ENCODE measurements at regions of chr14 and their contacts with region 1.

Region 1: DNA sequence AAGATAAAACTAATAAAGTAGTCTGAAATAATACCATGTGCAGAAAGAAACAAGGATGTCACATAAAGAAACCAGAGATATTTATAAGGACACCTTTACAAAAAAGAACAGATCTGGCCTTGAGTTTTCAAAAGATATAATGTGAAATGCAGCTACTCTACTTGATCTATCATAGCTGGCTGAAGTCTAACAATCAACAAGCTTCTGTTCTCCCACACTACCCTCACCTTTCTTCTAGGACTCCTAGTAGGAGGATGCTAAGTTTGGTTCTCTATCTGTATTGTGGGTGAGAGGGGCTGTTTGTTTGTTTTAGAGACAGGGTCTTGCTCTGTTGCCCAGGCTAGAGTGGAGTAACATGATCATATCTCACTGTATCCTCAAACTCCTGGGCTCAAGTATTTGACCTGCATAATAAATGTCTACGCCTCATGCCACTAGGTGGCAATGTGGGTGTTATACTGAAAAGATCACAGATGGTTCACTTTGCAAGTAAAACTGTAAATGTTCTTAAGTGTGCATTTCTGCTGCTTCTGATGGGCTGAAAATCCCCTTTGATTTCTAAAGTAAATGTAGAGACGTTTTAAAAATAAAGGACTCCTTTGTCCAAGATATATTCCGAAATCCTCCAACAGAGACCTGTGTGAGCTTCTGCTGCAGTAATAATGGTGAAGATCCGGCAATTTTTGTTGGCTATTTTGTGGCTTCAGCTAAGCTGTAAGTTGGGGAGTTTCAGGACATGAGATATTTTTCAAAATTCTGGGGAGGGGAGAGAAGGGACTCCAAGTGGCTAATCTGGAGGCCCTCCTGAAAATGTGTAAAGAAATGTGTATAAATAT is 269.3 kb downstream of the DAD1 start:
- DNase-seq: peak in 1 of 2 donors; percentile 73
- H3K4me3 ChIP-seq: no peak overlapping the region
- H3K27ac ChIP-seq: no peak overlapping the region
- H3K4me1 ChIP-seq: no peaks in the 10 kb centered on the region
- H3K27me3 ChIP-seq: no peaks in the 10 kb centered on the region
- CTCF ChIP-seq: peak; percentile 48 to 70 (median 64)

Region 2: DNA sequence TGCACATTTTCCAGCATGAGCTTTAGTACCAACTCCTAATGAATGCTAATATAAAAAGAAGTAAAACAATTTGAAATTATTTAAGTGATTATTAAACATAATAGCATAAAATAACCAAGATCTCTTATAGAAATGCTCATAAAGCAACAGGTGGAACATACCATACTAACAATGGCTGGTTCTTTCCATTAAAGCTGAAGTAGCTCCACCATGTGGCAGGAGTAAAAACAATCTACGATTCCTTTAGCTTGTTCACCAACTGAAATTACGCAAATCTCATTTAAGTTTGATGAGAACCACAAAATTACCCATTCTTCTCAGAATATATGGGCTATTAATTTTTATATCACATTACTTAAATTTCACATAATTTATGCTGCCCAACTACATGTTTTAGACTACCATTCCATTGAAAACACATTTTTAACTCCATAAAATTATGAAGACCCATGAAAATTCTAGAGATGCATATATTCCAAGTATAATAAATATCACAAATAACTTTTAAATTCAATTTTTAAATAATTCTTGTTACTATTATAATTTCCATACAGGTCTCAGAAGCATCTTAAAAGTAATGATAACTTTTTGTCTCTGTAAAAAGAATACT is 55.7 kb after region 1 on chr14:
- intact Hi-C with region 1: loop called (anchors 1 kb)
- DNase-seq: no peak
- H3K4me3 ChIP-seq: no peak overlapping the region
- H3K27ac ChIP-seq: no peak overlapping the region
- H3K4me1 ChIP-seq: peaks cover 0 to 12% of the 10 kb centered on the region in 2 donors
- H3K27me3 ChIP-seq: no peaks in the 10 kb centered on the region
- CTCF ChIP-seq: peak; percentile 10 to 57 (median 37)

Region 3: DNA sequence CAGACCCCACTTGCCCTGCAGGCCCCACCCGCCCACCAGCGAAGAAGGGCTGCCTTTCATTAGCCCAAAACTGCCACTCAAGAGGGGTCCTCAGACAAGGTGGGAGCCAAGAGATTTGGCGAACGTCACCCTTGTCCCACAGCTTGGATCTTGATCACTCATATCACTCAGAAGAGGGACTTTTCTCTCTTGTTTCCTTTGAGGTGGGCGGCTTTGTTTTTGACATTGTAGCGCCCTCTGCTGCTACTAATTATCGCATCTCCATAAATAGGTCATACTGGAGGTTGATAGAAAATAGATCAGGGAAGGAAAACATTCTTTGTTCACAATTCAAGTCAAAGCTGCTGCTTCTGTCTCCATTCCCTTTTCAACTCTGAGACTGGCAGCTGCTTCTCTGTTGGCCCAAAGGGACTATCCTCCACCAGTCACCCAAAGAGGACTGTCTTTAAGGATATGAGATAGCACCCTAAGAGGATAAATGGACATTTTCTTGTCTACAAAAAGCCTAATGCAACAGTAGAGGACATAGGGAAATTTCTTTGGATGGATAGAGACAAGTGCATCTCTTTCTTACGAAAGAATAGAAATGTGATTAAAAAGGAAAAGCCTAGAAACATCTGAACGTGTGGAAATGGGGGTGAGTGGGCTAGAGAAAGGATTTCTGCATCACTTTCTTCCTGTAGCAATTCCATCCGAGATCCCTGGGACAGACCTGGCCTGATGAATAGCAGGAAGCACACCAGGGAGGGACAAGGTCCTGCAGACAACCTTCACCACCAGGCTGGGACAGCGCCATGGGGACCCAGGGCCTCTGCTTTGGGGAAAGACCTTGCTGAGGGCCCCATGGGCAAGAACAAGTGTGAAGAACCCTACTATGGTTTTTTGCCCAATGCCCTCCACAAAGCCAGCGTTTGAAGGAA is 153.5 kb after region 1 on chr14:
- intact Hi-C with region 1: loop called (anchors 5 kb)
- DNase-seq: no peak
- H3K4me3 ChIP-seq: no peak overlapping the region
- H3K27ac ChIP-seq: no peak overlapping the region
- H3K4me1 ChIP-seq: peaks cover 0 to 3% of the 10 kb centered on the region in 2 donors
- H3K27me3 ChIP-seq: no peaks in the 10 kb centered on the region
- CTCF ChIP-seq: peak in 1 of 3 experiments; percentile 53